Endothelial cell of umbilical vein (primary cell): ENCODE measurements at regions of chr22 and their contacts with region 1.

Region 1: DNA sequence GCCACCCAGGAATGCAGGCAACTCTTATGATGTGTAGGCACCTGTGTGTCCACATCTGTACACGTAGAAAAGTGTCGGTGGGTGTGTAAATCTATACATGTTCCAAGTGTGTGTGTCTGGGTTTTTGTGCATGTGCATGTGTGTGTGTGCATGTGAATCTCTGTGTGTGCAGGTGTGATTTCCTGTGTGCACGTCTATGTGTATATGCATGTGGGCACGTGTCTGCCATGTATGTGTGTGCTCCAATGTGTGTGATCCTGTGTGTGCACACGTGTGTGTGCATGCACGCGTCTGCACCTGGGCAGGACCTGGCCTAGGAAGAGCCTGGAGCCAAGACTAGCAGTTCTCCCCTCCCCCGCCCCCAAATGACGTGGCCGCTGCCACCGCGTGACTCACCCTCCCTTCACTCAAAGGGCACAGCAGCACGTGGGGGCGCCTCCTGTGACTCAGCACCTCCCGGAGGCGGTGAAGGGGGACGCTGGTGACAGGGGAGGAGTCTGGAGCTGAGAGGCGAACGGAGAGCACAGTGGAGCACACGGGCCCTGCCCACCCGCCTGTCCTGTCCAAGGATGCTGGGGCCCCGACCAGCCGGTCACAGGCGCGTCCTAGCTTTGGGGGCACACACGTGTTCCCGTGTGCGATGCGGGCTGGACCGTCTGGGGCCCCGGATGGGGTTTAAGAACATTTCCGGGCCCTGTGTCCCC is 10.1 kb downstream of the PIM3 start:
- DNase-seq: peak; percentile 96
- H3K4me3 ChIP-seq: peak overlapping the region; percentile 12 to 42 (median 24)
- H3K27ac ChIP-seq: peak overlapping the region; percentile 54
- H3K4me1 ChIP-seq: peaks cover 8% of the 10 kb centered on the region
- H3K27me3 ChIP-seq: no peaks in the 10 kb centered on the region
- CTCF ChIP-seq: no peak
- POLR2A ChIP-seq: peak; percentile 64

Region 2: DNA sequence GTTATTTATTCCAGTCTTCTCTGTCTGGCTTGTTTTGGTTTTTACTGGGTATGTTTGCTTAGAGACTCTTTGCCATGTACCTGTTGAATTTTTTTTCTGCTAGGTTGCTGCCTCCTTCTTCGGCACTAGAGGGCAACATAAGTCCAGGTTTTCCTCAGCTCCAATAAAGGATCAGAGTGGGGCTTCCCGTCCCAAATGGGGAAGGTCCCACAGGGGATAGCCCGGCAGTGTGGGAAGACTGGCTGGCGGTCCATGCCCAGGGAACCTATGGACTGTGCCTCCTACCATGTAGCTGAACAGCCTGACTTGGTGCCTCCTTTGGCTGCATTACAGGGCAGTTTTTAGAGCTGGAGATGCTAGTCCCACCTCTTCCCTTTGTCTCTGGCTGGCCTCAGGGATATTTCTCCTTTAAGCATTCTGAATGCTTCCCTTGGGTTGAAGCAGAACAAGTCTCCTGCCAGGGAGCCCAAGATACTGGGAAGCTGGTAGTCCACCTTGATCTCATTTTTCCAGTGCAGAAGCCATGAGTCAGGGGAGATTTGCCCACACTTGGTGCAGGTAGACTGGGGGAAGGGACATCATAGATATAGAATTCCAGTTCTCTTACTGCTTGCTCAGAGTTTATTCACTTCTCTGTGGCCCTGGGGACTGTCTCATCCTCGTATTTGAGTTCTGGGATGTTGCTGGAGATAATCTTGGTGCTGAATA is 203.2 kb before region 1 on chr22:
- CTCF ChIA-PET with region 1: no interaction called
- POLR2A ChIA-PET with region 1: no interaction called
- dilution Hi-C with region 1: no loop called
- intact Hi-C with region 1: loop called (anchors 5 kb)
- DNase-seq: peak; percentile 64
- H3K4me3 ChIP-seq: no peak overlapping the region
- H3K27ac ChIP-seq: no peak overlapping the region
- H3K4me1 ChIP-seq: no peaks in the 10 kb centered on the region
- H3K27me3 ChIP-seq: no peaks in the 10 kb centered on the region
- CTCF ChIP-seq: peak; percentile 60 to 64
- POLR2A ChIP-seq: no peak

Region 3: DNA sequence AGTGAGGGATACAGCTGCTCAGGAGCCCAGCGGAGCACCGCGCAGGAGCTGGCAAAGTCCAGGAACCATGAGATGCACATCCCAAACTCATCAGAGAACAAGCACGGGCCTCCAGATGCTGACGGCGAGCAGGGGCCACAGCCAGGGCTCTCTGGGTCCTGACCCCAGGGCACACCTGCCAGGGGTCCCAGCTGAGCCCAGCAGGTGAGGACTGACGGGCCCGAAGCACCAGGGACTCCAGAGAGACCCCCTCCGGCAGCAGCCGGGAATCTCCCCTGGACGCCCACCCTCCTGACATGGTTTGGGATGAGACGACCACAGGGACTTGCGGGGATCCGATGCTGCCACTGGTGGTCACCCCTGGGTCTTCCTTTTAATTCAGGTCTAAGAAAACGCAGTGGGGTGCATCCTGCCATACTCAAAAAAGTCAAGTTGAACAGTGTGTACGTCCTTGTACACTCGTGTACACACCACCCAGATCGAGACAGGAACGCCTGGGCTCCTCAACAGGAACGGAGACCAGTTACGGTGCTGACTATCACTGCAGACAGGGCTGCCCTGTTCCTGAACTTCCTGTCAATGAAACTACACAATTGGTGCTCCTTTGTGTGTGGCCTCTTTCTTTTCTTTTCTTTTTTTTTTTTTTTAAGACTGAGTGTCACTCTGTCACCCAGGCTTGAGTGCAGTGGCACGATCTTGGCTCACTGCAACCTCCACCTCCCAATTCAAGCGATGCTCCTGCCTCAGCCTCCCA is 65.5 kb after region 1 on chr22:
- CTCF ChIA-PET with region 1: no interaction called
- POLR2A ChIA-PET with region 1: no interaction called
- dilution Hi-C with region 1: no loop called
- intact Hi-C with region 1: no loop called
- DNase-seq: no peak
- H3K4me3 ChIP-seq: no peak overlapping the region
- H3K27ac ChIP-seq: no peak overlapping the region
- H3K4me1 ChIP-seq: no peaks in the 10 kb centered on the region
- H3K27me3 ChIP-seq: no peaks in the 10 kb centered on the region
- CTCF ChIP-seq: no peak
- POLR2A ChIP-seq: no peak

Region 4: GRCh38 chr22:50200461-50201190 is 229.9 kb after region 1 on chr22 and contains the start of gene SELENOO:
- CTCF ChIA-PET with region 1: no interaction called
- POLR2A ChIA-PET with region 1: no interaction called
- dilution Hi-C with region 1: no loop called
- intact Hi-C with region 1: loop called (anchors 10 kb)
- DNase-seq: peak; percentile 80
- H3K4me3 ChIP-seq: peak within 1 kb of the TSS; percentile 58 to 85 (median 75)
- H3K27ac ChIP-seq: peak within 1 kb of the TSS; percentile 60
- H3K4me1 ChIP-seq: peaks cover 18% of the 10 kb centered on the region
- H3K27me3 ChIP-seq: no peaks in the 10 kb centered on the region
- CTCF ChIP-seq: no peak
- POLR2A ChIP-seq: peak; percentile 83
- total RNA-seq, gene SELENOO: 24.1 and 28.0 TPM in 2 replicates